Ascending aorta (tissue), 2 donors: ENCODE measurements at regions of chr9 and their contacts with region 1.

Region 1: DNA sequence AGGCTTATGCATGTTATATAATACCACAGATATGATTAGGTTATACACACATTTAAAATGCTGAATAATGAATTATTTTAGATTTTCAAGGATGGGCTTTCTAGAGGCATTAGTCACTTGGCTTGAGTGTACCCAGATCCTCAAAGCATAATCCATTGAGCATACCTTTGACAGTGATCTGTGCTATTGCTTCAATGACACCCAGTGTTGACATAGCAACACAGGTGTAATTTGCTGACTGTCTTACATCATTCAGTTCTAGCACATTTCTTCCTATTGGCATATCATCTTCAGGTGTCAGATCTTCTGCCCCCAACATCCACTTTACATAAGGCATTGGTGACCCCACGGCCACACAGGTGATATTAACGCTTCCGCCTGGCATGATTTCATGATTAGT is 721.5 kb upstream of the DMAC1 start:
- DNase-seq: no peak
- H3K4me3 ChIP-seq: no peak overlapping the region
- H3K27ac ChIP-seq: no peak overlapping the region
- H3K4me1 ChIP-seq: no peaks in the 10 kb centered on the region
- H3K27me3 ChIP-seq: no peaks in the 10 kb centered on the region
- CTCF ChIP-seq: no peak

Region 2: GRCh38 chr9:8600914-8601680 is 80.0 kb after region 1 on chr9:
- intact Hi-C with region 1: loop called (anchors 10 kb)
- DNase-seq: no peak
- H3K4me3 ChIP-seq: no peak overlapping the region
- H3K27ac ChIP-seq: no peak overlapping the region
- H3K4me1 ChIP-seq: no peaks in the 10 kb centered on the region
- H3K27me3 ChIP-seq: no peaks in the 10 kb centered on the region
- CTCF ChIP-seq: no peak